Sciatic nerve (tissue), 2 donors: ENCODE measurements at regions of chr16 and their contacts with region 1.

Region 1: DNA sequence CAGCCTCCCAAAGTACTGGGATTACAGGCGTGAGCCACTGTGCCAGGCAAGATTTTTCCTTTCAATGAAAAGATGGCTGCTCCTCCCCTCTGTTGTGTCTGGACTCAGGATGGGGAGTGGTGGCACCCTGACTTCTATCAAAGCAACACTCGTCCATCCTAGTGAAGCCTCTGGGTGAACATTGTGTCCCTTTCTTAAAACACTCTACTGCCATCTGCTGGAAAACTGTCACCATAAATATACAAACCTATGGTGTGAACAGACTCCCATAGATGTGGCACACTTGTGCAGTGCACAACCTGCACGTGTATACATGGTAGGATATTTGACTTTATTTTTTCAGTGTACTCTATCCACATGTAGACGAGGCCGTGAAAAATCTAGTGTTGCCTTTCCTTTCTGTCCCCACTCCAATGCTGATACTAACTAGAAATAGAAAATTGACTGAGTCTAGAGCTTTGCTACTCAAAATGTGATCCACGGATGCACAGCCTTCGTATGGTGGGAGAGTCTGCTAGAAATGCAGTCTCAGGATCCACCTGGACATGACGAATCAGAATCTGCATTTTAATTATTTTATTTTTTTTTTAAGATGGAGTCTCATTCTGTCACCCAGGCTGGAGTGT is 55.9 kb upstream of the PLCG2 start:
- DNase-seq: no peak
- ATAC-seq: peak; percentile 93

Region 2: DNA sequence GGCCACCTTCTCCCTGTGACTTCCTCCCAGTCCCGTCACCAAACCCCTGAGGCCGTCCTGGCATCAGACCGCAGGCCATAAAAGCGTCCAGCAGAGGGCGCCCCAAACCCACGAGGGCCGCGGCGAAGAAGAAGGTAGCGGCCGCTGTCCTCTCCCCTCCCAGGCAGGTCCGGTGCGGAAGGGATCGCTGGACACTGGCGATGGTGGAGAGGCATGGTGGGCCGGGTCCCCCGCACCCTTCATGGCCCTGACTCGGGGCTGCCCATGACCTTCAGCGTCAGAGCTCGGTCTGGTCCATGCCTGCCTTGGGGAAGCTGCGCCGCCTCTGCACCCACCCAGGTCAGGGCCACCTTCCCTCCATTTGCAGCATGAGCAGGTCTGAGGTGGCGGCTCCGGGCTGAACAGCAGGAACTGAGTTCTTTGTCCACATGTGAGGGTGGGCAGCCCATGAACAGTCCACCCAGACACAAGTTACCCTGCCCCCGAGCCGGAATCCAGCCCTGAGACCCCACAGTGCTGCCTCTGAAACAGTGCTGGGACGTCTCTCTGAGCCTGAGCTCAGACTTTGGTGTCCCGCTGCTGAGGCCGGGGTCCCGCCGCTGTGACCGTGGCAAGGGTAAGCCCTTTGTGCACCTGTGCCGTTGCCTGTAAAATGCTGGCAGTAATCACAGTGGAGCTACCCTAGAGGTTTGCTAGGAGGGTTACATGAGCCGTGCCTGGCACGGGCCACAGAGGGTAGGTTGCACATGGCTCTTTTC is 319.4 kb before region 1 on chr16:
- intact Hi-C with region 1: loop called (anchors 5 kb)
- DNase-seq: peak; percentile 94
- ATAC-seq: peak; percentile 95

Region 3: GRCh38 chr16:81623363-81624102 is 99.7 kb before region 1 on chr16:
- intact Hi-C with region 1: loop called (anchors 10 kb)
- DNase-seq: no peak
- ATAC-seq: peak; percentile 38

Region 4: GRCh38 chr16:81745704-81746558 is 22.7 kb after region 1 on chr16:
- intact Hi-C with region 1: no loop called
- DNase-seq: peak; percentile 85
- ATAC-seq: peak; percentile 90